ENCODE measurements at regions of chr11 and their contacts with region 1.

Region 1: GRCh38 chr11:86784241-86784681 is 16.1 kb upstream of the PRSS23 start:
- DNase-seq: no peak
- ATAC-seq: no peak
- H3K4me3 ChIP-seq: no peak overlapping the region
- H3K27ac ChIP-seq: no peak overlapping the region
- H3K4me1 ChIP-seq: no peaks in the 10 kb centered on the region
- H3K27me3 ChIP-seq: peaks cover 0 to 3% (median 0%) of the 10 kb centered on the region in 7 donors
- CTCF ChIP-seq: no peak

Region 2: DNA sequence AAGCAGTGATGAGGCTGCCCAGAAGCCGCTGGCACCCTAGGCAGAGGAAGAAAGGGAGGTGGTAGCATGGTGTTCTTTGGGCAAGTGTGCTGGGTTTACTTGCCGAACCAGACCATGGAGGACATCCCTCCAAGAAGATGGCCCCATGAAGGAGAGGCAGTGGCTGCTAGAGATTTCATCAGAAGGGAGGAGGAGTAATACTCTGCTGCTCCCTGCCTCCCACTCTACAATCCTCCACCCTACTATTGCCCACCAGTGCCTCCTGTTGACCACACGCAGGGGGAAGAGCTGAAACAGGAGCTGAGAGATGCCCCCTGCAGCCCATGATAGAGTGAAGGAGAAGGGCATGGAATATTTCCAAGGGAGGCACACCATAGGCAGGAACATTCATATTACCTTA is 34.9 kb before region 1 on chr11:
- intact Hi-C with region 1: loop called in 1 of 10 experiments (anchors 5 kb)
- DNase-seq: no peak
- ATAC-seq: no peak
- H3K4me3 ChIP-seq: no peak overlapping the region
- H3K27ac ChIP-seq: no peak overlapping the region
- H3K4me1 ChIP-seq: no peaks in the 10 kb centered on the region
- H3K27me3 ChIP-seq: no peaks in the 10 kb centered on the region
- CTCF ChIP-seq: no peak